Calu3 (cell line): ENCODE measurements at regions of chr17 and their contacts with region 1.

Region 1: DNA sequence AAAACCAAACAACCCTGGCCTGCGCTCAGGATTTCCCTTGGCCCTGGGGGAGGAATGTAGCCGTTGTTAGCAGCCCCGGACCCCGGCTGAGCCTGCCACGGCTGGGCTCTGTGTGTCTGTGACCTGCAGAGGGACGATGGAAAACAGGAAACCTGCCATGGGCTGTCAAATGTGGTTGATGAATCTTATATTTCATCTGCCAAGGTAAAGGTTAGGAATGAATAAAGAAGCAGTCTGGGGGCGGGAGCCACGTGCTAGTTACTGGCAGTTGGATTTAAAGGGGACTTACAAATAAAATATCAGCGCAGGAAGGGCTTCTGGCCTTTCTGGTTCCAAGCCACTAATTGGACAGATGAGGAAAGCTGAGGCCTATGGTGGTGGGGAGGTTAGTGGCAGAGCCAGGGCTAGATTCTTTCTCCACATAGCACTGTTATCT is at the start of gene KRT23:
- DNase-seq: peak; percentile 87
- H3K4me3 Mint-ChIP-seq: peak within 1 kb of the TSS; percentile 71
- H3K27ac Mint-ChIP-seq: peak within 1 kb of the TSS; percentile 96
- H3K4me1 Mint-ChIP-seq: peaks cover 43% of the 10 kb centered on the region
- H3K27me3 Mint-ChIP-seq: no peaks in the 10 kb centered on the region
- CTCF ChIP-seq: no peak
- total RNA-seq, gene KRT23: 1,389 and 1,709 TPM in 2 replicates

Region 2: DNA sequence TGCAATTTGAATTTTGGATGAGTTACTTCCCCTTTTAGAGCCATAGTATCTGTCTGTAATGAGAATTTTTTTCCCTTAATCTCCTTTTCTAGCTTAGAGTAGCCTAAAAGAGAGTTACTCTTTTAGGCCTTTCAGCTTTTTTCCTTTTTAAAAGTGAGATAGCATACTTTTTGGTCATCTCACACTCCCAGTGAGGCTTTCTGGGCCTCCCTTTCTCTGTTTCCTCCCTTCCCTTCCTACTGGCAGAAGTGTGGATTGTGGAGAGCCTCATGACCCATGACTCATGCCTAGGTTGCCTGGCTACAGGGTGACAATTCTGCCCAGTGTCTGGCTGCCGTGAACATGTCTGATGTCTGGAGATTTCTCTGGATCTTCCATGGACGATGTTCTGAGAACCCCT is 15.2 kb before region 1 on chr17:
- CTCF ChIA-PET with region 1: interaction called, 13 read pairs
- intact Hi-C with region 1: no loop called
- DNase-seq: peak; percentile 93
- H3K4me3 Mint-ChIP-seq: peak overlapping the region; percentile 26
- H3K27ac Mint-ChIP-seq: peak overlapping the region; percentile 96
- H3K4me1 Mint-ChIP-seq: peaks cover 69% of the 10 kb centered on the region
- H3K27me3 Mint-ChIP-seq: no peaks in the 10 kb centered on the region
- CTCF ChIP-seq: no peak

Region 3: GRCh38 chr17:40956401-40957254 is 19.2 kb after region 1 on chr17:
- CTCF ChIA-PET with region 1: interaction called, 48 read pairs
- intact Hi-C with region 1: loop called (anchors 1 kb)
- DNase-seq: peak; percentile 88
- H3K4me3 Mint-ChIP-seq: peak overlapping the region; percentile 27
- H3K27ac Mint-ChIP-seq: peak overlapping the region; percentile 94
- H3K4me1 Mint-ChIP-seq: peaks cover 97% of the 10 kb centered on the region
- H3K27me3 Mint-ChIP-seq: no peaks in the 10 kb centered on the region
- CTCF ChIP-seq: no peak

Region 4: DNA sequence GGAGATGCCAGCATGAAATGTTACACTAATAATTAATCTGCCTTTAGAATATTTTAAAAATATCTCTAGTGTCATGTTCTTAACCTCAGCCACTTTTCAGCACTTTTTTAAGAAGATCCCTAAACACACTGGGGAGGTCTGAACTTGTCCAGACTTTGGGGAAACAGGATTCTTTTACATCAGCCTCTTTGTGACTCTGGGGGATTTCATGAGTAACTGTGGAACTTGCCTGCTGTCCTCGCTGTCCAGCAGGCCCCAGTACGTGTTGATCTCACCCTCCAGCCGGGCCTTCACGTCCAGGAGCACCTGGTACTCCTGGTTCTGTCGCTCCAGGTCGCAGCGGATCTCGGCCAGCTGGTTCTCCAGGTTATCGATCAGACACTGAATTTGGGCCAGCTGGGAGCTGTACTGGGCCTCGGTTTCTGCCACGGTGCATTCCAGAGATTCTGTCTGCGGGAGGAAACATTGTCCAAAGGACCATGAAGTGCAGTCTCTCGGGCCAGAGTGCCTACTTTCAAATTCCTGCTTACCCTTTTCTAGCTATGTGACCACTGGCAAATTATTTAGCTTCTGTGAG is 41.3 kb after region 1 on chr17:
- CTCF ChIA-PET with region 1: no interaction called
- intact Hi-C with region 1: no loop called
- DNase-seq: no peak
- H3K4me3 Mint-ChIP-seq: no peak overlapping the region
- H3K27ac Mint-ChIP-seq: no peak overlapping the region
- H3K4me1 Mint-ChIP-seq: peaks cover 11% of the 10 kb centered on the region
- H3K27me3 Mint-ChIP-seq: no peaks in the 10 kb centered on the region
- CTCF ChIP-seq: no peak

Region 5: GRCh38 chr17:41060052-41060604 is 122.7 kb after region 1 on chr17 and contains the start of gene KRTAP2-3:
- CTCF ChIA-PET with region 1: interaction called, 25 read pairs
- intact Hi-C with region 1: loop called (anchors 1 kb)
- DNase-seq: peak; percentile 90
- H3K4me3 Mint-ChIP-seq: peak within 1 kb of the TSS; percentile 33
- H3K27ac Mint-ChIP-seq: peak within 1 kb of the TSS; percentile 88
- H3K4me1 Mint-ChIP-seq: peaks cover 54% of the 10 kb centered on the region
- H3K27me3 Mint-ChIP-seq: no peaks in the 10 kb centered on the region
- CTCF ChIP-seq: no peak
- total RNA-seq, gene KRTAP2-3: 9.4 and 18.2 TPM in 2 replicates